ENCODE measurements at regions of chr7 and their contacts with region 1.

Region 1: GRCh38 chr7:90173127-90173844 is 19.0 kb downstream of the STEAP1 start:
- DNase-seq: no peak
- H3K4me3 ChIP-seq: no peak overlapping the region
- H3K4me1 ChIP-seq: no peaks in the 10 kb centered on the region
- H3K27me3 ChIP-seq: no peaks in the 10 kb centered on the region

Region 2: GRCh38 chr7:90262438-90262837 is 89.2 kb after region 1 on chr7:
- in situ Hi-C with region 1: loop called (anchors 25 kb)
- DNase-seq: peak in 1 of 2 experiments; percentile 47
- H3K4me3 ChIP-seq: no peak overlapping the region
- H3K4me1 ChIP-seq: no peaks in the 10 kb centered on the region
- H3K27me3 ChIP-seq: no peaks in the 10 kb centered on the region; the same call in 1 of the 2 replicates

Region 3: GRCh38 chr7:90595801-90596671 is 422.8 kb after region 1 on chr7 and contains the start of gene CDK14:
- in situ Hi-C with region 1: no loop called
- DNase-seq: peak; percentile 40 to 87
- H3K4me3 ChIP-seq: peak within 1 kb of the TSS; percentile 54
- H3K4me1 ChIP-seq: peaks cover 12% of the 10 kb centered on the region; the same call in 1 of the 2 replicates
- H3K27me3 ChIP-seq: no peaks in the 10 kb centered on the region